Left lung (tissue), 14 donors: ENCODE measurements at regions of chr5 and their contacts with region 1.

Region 1: GRCh38 chr5:14264604-14265316 is 121.6 kb downstream of the TRIO start:
- DNase-seq: peak; percentile 80 to 97 (median 93)
- ATAC-seq: peak; percentile 94
- H3K4me3 ChIP-seq: peak overlapping the region in 1 of 2 donors; percentile 13
- H3K27ac ChIP-seq: no peak overlapping the region
- H3K4me1 ChIP-seq: peaks cover 7 to 50% of the 10 kb centered on the region in 2 donors
- H3K27me3 ChIP-seq: no peaks in the 10 kb centered on the region
- CTCF ChIP-seq: no peak

Region 2: DNA sequence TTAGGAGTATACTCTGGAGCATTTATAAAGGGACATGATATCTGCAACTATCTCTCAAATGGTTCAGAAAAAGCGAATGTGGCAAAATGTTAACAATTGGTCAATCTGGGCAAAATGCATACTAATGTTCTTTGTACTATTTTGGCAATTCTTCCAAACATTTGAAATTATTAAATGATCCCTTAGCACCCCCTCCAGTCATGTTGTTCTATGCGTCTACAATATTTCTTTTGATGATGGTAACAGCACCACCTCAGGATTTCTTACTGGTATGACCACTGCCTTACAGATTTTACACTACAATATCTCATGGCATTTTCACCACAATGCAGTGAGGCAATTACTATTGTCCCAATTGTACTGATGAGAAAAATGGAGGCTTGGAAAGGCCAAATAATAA is 174.5 kb before region 1 on chr5:
- intact Hi-C with region 1: no loop called
- DNase-seq: no peak
- ATAC-seq: no peak
- H3K4me3 ChIP-seq: no peak overlapping the region
- H3K27ac ChIP-seq: no peak overlapping the region
- H3K4me1 ChIP-seq: no peaks in the 10 kb centered on the region
- H3K27me3 ChIP-seq: no peaks in the 10 kb centered on the region
- CTCF ChIP-seq: no peak

Region 3: GRCh38 chr5:14142827-14143548 is 121.8 kb before region 1 on chr5 and contains the start of gene TRIO:
- intact Hi-C with region 1: loop called in 1 of 2 experiments (anchors 10 kb)
- DNase-seq: peak; percentile 92 to 95 (median 94)
- ATAC-seq: peak; percentile 87
- H3K4me3 ChIP-seq: peak within 1 kb of the TSS; percentile 87 to 88
- H3K27ac ChIP-seq: peak within 1 kb of the TSS; percentile 90 to 96
- H3K4me1 ChIP-seq: peaks cover 15 to 39% of the 10 kb centered on the region in 2 donors
- H3K27me3 ChIP-seq: peaks cover 0 to 14% of the 10 kb centered on the region in 2 donors
- CTCF ChIP-seq: peak; percentile 17 to 33
- polyA plus RNA-seq, gene TRIO: 84.4 to 99.1 (median 88.9) TPM

Region 4: GRCh38 chr5:14190194-14191164 is 74.3 kb before region 1 on chr5:
- intact Hi-C with region 1: loop called in 1 of 2 experiments (anchors 10 kb)
- DNase-seq: no peak
- ATAC-seq: peak; percentile 76
- H3K4me3 ChIP-seq: no peak overlapping the region
- H3K27ac ChIP-seq: peak overlapping the region; percentile 64 to 79
- H3K4me1 ChIP-seq: peaks cover 30 to 69% of the 10 kb centered on the region in 2 donors
- H3K27me3 ChIP-seq: no peaks in the 10 kb centered on the region
- CTCF ChIP-seq: no peak

Region 5: GRCh38 chr5:14415024-14415697 is 150.4 kb after region 1 on chr5:
- intact Hi-C with region 1: no loop called
- DNase-seq: no peak
- ATAC-seq: no peak
- H3K4me3 ChIP-seq: no peak overlapping the region
- H3K27ac ChIP-seq: no peak overlapping the region
- H3K4me1 ChIP-seq: no peaks in the 10 kb centered on the region
- H3K27me3 ChIP-seq: no peaks in the 10 kb centered on the region
- CTCF ChIP-seq: no peak